ENCODE measurements at regions of chr1 and their contacts with region 1.

Region 1: DNA sequence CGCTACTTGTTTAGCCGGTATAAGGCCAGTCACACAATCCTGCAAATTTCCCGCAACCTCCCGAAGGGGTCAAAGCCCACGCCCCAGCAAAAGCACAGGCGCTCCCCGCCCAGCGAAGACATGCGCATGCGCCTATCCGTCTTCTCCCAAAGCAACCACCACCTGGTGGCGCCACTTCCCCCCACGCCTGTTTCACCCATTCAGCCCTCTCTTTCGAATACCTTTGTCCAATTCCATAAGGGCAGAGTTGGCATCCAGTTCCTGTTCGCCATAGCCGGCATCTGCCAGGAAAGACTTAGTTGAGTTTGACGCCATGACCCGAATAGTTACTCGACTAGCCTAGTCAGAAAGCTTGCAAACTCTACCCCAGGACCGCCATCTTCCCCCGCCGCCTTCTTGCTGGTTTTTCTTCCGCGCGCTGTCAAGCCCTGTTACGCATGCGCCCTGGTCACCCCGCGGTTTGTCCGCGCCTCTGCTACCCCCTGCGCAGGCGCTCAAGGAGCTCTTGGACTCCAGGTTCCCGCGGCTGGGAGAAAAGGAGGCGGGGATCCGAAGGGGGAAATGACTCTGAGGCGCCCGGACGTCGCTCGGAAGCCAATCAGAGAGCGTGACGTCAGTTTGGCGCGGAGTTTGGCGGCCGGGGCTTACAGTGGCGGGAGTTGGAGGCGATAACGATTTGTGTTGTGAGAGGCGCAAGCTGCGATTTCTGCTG is at the starts of genes DTL and INTS7:
- DNase-seq: peak; percentile 99
- H3K4me3 ChIP-seq: peak within 1 kb of the TSS; percentile 47 to 62 (median 58)
- H3K27ac ChIP-seq: peak within 1 kb of the TSS; percentile 84 to 90 (median 86)
- H3K4me1 ChIP-seq: peaks cover 0 to 22% (median 16%) of the 10 kb centered on the region in 4 donors
- H3K27me3 ChIP-seq: no peaks in the 10 kb centered on the region
- CTCF ChIP-seq: peak; percentile 93 to 98 (median 97)
- EP300 ChIP-seq: no peak
- POLR2A ChIP-seq: no peak
- total RNA-seq, gene DTL: 0.36 to 0.41 TPM in 2 of 4 donors, not detected in the others
- total RNA-seq, gene INTS7: 5.6 to 13.2 (median 6.9) TPM

Region 2: GRCh38 chr1:211680752-211681327 is 354.4 kb before region 1 on chr1:
- intact Hi-C with region 1: loop called (anchors 10 kb)
- DNase-seq: peak; percentile 78
- H3K4me3 ChIP-seq: no peak overlapping the region
- H3K27ac ChIP-seq: no peak overlapping the region
- H3K4me1 ChIP-seq: peaks cover 0 to 3% (median 3%) of the 10 kb centered on the region in 4 donors
- H3K27me3 ChIP-seq: no peaks in the 10 kb centered on the region
- CTCF ChIP-seq: peak; percentile 55 to 70 (median 66)
- EP300 ChIP-seq: no peak
- POLR2A ChIP-seq: no peak

Region 3: GRCh38 chr1:211830330-211831142 is 204.7 kb before region 1 on chr1 and contains the start of gene LPGAT1:
- intact Hi-C with region 1: loop called (anchors 5 kb)
- DNase-seq: peak; percentile 84
- H3K4me3 ChIP-seq: peak within 1 kb of the TSS; percentile 45 to 97 (median 92)
- H3K27ac ChIP-seq: peak within 1 kb of the TSS; percentile 83 to 92 (median 90)
- H3K4me1 ChIP-seq: peaks cover 0 to 44% (median 34%) of the 10 kb centered on the region in 4 donors
- H3K27me3 ChIP-seq: no peaks in the 10 kb centered on the region
- CTCF ChIP-seq: peak in 3 of 4 experiments; percentile 26 to 75 (median 32)
- EP300 ChIP-seq: no peak
- POLR2A ChIP-seq: no peak
- total RNA-seq, gene LPGAT1: 26.8 to 46.7 (median 37.4) TPM

Region 4: DNA sequence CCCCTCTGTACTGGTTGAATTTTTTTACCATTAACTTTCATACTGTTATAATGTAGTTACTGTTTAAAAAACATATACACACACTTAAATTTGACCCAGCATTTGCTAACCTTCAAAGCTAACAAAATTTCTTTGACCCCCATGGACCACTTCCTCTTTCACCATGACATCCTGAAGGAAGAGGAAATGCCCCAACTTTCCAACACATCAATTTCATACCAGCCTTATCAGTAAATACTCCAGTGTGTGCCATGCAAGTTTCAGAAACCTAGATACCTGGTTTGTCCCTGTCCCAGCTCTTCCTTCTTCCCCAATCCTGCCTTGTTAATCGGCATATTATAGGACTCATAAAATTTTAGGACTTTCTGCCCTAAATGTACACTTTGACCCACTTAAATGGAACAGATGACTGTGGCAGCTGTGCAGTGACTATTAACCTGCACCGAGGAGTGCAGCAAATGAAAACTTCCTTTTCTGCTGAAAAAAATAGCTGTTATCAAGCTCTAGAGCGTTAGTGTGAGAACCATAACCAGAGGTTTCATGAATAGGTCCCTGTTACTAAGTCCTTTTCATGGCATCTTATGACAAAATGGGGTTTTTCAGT is 54.4 kb after region 1 on chr1:
- intact Hi-C with region 1: no loop called
- DNase-seq: no peak
- H3K4me3 ChIP-seq: no peak overlapping the region
- H3K27ac ChIP-seq: no peak overlapping the region
- H3K4me1 ChIP-seq: peaks cover 0 to 13% (median 10%) of the 10 kb centered on the region in 4 donors
- H3K27me3 ChIP-seq: no peaks in the 10 kb centered on the region
- CTCF ChIP-seq: no peak
- EP300 ChIP-seq: no peak
- POLR2A ChIP-seq: no peak

Region 5: DNA sequence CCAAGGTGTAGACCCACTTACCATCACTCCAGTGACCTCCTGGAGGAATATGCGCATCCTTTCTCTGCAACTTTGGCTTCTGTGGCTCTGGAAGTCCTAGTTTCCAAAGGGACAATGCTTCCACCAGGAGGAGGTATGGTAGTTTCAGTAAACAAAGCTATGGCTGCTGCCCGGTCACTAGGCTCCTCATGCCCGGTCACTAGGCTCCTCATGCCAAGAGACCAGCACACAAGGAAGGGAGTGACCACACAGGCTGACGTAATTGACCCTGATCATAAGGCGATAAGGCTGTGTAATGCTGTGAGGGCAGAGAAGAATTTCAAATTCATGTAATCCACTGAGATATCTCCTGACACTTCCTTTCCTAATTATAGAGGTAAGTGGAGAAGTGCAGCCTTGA is 103.2 kb after region 1 on chr1:
- intact Hi-C with region 1: no loop called
- DNase-seq: no peak
- H3K4me3 ChIP-seq: no peak overlapping the region
- H3K27ac ChIP-seq: no peak overlapping the region
- H3K4me1 ChIP-seq: no peaks in the 10 kb centered on the region
- H3K27me3 ChIP-seq: no peaks in the 10 kb centered on the region
- CTCF ChIP-seq: no peak
- EP300 ChIP-seq: no peak
- POLR2A ChIP-seq: no peak

Region 6: DNA sequence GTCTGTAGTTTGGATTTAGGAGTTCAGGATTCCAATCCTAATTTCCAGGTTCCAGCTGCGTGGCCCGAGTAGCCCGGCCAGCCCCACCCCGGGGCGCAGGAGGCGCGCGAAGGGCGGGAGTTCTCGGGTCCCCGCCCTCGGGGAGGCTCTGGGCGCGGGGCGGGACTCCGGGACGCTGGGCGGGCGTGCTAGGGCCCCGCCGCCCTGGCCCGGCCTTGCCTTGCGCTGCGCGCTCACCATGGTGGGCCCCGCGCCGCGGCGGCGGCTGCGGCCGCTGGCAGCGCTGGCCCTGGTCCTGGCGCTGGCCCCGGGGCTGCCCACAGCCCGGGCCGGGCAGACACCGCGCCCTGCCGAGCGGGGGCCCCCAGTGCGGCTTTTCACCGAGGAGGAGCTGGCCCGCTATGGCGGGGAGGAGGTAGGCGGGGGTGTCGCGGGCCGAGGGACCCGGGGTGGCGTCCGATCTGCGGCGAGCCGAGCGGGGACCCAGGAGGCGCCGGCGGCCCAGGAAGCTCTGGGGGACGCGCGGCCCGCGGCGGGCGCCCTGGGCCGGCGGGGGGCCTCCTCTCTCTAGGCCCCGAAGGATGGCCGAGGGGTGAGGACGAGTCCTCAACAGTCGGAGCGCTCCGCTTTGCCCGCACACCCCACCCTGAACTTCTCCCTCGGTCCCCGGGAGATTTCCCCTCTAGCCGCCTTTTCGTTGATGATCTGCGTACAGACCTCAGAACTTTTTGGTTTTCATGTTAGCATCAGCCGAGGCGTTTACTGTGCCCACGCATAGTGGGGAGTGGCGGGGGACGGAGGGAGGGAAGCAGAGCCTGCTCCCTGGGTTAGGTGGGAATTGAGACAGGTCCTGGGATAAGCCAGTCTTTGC is 397.7 kb after region 1 on chr1 and contains the start of gene NENF:
- intact Hi-C with region 1: loop called (anchors 5 kb)
- DNase-seq: peak; percentile 90
- H3K4me3 ChIP-seq: peak within 1 kb of the TSS; percentile 35 to 96 (median 80)
- H3K27ac ChIP-seq: peak within 1 kb of the TSS; percentile 76 to 90 (median 88)
- H3K4me1 ChIP-seq: peaks cover 0 to 18% (median 13%) of the 10 kb centered on the region in 4 donors
- H3K27me3 ChIP-seq: no peaks in the 10 kb centered on the region
- CTCF ChIP-seq: no peak
- EP300 ChIP-seq: no peak
- POLR2A ChIP-seq: no peak
- total RNA-seq, gene NENF: 100 to 136 (median 120) TPM

Region 7: DNA sequence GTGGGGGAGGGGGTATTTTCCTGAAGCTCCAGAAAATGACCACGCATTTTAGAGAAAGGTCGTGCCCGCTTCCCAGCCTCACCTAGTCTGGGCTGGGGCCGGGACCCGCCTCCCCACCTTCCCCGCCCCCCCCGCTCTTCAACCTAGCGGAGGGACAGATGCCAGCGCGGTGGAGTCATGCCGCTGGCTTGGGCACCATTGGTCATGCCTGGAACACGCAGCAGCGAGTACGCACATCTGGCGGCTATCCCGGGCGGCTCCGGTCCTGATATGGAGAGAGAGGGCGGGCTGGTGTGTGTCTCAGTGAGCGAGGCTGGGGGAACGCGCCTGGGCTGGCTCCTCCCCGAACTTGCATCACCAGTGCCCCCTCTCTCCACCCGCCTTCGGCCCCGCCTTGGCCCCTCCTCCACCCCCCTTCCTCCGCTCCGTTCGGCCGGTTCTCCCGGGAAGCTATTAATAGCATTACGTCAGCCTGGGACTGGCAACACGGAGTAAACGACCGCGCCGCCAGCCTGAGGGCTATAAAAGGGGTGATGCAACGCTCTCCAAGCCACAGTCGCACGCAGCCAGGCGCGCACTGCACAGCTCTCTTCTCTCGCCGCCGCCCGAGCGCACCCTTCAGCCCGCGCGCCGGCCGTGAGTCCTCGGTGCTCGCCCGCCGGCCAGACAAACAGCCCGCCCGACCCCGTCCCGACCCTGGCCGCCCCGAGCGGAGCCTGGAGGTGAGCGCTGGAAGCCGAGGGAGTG is 573.1 kb after region 1 on chr1 and contains the start of gene ATF3:
- intact Hi-C with region 1: loop called (anchors 5 kb)
- DNase-seq: peak; percentile 100
- H3K4me3 ChIP-seq: peak within 1 kb of the TSS; percentile 80 to 88 (median 81)
- H3K27ac ChIP-seq: peak within 1 kb of the TSS; percentile 97 to 99 (median 99)
- H3K4me1 ChIP-seq: peaks cover 0 to 54% (median 38%) of the 10 kb centered on the region in 4 donors
- H3K27me3 ChIP-seq: peaks cover 12 to 39% (median 34%) of the 10 kb centered on the region in 3 donors
- CTCF ChIP-seq: no peak
- EP300 ChIP-seq: peak; percentile 24 to 67 (median 40)
- POLR2A ChIP-seq: peak; percentile 98
- total RNA-seq, gene ATF3: 3.2 to 32.0 (median 11.8) TPM